Cardiac septum (tissue), 1 donor: ENCODE measurements at regions of chr10 and their contacts with region 1.

Region 1: GRCh38 chr10:78543749-78544362 is 510.2 kb downstream of the RPS24 start:
- DNase-seq: peak; percentile 79

Region 2: DNA sequence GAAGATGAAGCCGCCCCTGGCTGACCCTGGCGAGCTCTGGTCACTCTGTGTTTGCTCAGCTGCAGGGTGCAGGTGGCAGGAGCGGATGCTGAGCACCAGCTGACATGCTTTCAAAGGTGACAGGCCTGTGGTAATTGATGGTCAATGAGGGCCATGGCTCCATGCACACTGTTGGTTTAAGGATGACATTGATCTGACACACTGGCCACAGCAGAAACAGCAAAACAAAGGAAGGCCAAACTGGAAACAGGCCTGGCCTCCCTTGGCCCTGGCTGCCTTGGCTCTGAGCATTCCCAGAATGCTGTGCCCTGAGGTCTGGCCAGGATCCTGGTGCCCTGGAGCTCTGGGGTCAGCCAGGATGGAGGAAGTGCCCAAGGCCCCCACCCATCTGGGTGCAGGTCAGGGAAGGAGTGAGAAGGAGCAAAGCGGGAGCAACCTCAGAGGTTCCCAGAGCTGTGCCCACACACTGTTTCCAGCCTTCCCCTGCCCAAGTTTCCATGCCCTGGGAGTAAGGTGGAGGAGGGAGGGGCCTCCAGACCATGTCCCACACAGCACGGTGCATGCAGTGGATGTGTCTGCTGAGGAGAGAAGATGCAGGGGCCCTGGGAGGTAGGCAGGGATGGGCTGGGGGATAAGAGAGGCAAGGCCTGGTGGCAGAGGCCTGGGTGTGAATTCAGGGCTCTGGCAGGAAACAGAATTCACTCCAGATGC is 208.0 kb before region 1 on chr10:
- intact Hi-C with region 1: loop called (anchors 10 kb)
- DNase-seq: peak; percentile 76

Region 3: GRCh38 chr10:78559661-78560340 is 15.9 kb after region 1 on chr10:
- intact Hi-C with region 1: no loop called
- DNase-seq: no peak

Region 4: GRCh38 chr10:78634389-78634815 is 90.5 kb after region 1 on chr10:
- intact Hi-C with region 1: loop called (anchors 10 kb)
- DNase-seq: no peak

Region 5: GRCh38 chr10:78756604-78757349 is 212.9 kb after region 1 on chr10:
- intact Hi-C with region 1: loop called (anchors 10 kb)
- DNase-seq: peak; percentile 94